Thyroid gland (tissue), 4 donors: ENCODE measurements at regions of chr3 and their contacts with region 1.

Region 1: DNA sequence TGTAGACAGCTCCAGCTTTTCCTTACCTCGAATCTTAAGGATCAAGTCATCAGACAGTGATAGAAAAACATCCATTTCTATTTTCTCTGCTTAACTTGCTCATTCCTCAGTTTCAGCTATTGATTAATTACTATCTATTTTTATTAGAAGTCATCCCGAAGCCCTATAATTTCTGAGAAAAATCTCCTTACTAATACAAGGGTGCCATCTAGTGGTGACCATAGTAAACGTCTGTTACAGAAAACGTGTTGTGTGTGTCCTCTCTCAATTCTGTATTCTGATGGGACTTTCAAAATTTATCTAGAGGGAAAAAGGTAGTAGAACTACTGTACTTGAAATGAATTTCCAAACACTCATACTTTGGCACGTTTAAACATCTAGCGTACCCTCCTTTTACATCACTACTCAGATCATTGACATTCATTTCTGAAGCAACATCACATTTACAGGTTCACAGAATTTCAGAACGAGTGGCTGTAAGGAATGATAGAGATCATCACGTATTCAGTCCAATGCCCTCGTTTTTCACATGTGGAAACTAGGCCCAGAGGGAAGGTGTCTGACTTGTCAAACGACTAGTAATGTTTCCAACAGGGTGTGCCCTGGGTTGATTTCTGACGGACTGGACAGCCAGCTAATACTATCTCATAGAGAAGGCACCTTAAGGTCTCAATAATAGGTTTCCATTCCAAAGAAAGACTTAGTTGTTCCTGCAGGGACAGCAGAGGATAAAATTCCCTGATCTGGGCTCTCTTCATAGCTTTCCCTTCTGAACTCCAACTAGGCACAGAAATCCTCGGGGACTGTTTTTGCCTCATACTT is 25.6 kb downstream of the HACD2 start:
- DNase-seq: no peak
- H3K4me3 ChIP-seq: no peak overlapping the region
- H3K27ac ChIP-seq: no peak overlapping the region
- H3K4me1 ChIP-seq: no peaks in the 10 kb centered on the region
- H3K27me3 ChIP-seq: no peaks in the 10 kb centered on the region
- CTCF ChIP-seq: peak; percentile 44 to 76 (median 66)
- POLR2A ChIP-seq: no peak

Region 2: DNA sequence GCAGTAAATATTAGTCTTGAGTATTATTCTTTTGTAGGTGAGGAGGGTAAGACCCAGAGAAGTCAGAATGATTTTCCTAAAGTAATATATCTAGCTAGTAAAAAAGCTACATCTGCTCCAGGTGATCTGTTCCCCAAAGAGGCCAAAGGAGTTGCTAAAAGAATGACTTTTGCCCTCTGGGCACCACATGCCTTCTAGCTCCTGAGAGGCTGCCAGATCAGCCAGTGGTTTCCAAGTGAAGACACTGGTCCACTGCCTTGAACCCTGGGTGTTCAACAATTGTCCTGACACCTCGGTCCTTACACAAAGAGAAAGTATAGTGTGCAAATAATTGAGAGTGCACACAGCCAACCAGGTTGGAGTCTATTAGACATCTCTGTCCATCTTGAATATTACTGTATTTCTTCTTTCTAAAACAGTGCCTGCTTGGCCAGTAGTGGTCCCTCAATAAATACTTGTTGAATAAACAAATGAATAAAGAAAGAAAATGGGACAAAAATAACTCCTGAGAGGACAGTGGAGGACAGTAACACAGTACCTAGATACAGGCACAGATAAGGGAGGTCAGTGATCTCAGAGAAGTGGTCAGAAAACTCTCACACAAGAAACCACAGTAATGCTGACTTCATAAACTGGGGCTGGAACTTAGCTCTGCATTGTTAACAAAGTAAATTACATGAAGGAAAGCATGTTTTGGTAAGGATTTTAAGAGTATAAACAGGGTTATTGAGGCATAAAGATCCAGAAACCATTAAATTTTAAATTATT is 1290.8 kb before region 1 on chr3:
- intact Hi-C with region 1: no loop called
- DNase-seq: no peak
- H3K4me3 ChIP-seq: no peak overlapping the region
- H3K27ac ChIP-seq: no peak overlapping the region
- H3K4me1 ChIP-seq: no peaks in the 10 kb centered on the region
- H3K27me3 ChIP-seq: no peaks in the 10 kb centered on the region
- CTCF ChIP-seq: no peak
- POLR2A ChIP-seq: no peak

Region 3: DNA sequence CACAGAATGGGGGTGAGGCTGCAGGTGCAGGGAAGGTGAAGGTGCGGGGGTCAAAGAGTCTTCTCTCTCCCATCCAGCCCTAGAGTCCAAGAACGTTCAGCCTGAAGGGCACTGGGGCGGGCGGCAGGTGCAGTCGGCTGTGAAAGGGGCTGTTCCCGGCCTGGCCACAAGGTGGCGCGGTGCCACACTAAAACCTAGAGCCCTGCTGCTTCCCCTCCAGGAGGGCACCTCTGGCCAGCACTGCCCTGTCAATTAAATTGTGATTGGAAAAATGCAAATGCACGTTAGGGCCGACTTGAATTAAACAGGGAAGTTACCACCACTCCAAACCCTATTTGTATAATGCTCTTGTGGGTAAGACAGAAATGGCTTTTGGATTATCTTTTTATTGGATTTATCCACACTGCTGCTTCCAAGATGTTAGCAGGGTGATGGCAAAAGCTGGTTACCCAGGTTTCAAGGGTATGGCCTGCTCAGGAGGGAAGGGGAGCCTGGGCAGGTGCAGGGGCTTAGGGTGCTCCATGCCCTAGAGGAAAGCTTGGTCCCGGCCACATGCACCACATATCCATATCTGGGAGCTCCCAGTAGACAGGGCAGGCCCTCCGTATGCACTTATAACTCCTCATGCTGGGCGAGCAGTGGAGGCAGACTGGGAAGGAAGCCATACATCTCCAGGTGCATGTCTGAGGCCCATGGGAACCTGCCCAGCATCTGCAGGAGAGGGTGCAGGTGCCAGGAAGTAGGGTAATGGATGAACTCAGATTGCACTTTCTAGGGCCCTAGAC is 230.2 kb before region 1 on chr3:
- intact Hi-C with region 1: loop called (anchors 5 kb)
- DNase-seq: peak; percentile 79 to 80
- H3K4me3 ChIP-seq: no peak overlapping the region
- H3K27ac ChIP-seq: no peak overlapping the region
- H3K4me1 ChIP-seq: no peaks in the 10 kb centered on the region
- H3K27me3 ChIP-seq: no peaks in the 10 kb centered on the region
- CTCF ChIP-seq: peak; percentile 77 to 94 (median 85)
- POLR2A ChIP-seq: no peak

Region 4: DNA sequence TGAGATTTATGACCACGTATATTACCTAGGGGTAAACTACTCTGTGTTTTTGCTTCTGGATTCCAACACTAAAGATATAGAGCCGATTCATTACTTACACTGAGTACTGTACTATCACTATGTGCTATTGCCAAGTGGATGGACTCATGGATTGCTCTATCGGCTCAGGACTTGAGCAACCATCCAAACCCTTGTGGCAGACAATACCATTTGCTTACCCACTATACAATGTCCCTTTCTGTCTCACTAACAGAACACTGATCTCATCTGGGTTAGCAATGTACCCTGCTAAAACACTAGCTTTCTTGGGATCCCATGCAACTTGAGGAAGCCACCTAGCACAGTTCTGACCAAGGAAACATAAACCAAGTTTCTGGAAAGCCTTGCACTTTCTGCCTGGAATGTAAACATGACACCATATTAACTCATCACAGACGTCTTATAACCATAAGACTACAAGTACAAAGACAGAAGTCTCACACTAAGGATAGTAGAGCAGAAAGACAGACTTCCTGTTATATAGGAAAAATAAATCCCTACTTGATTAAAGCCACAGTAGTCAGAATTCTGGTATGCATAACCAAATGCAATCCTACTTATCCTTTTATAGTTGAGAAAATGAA is 13.0 kb before region 1 on chr3:
- intact Hi-C with region 1: no loop called
- DNase-seq: no peak
- H3K4me3 ChIP-seq: no peak overlapping the region
- H3K27ac ChIP-seq: no peak overlapping the region
- H3K4me1 ChIP-seq: no peaks in the 10 kb centered on the region
- H3K27me3 ChIP-seq: no peaks in the 10 kb centered on the region
- CTCF ChIP-seq: no peak
- POLR2A ChIP-seq: no peak

Region 5: DNA sequence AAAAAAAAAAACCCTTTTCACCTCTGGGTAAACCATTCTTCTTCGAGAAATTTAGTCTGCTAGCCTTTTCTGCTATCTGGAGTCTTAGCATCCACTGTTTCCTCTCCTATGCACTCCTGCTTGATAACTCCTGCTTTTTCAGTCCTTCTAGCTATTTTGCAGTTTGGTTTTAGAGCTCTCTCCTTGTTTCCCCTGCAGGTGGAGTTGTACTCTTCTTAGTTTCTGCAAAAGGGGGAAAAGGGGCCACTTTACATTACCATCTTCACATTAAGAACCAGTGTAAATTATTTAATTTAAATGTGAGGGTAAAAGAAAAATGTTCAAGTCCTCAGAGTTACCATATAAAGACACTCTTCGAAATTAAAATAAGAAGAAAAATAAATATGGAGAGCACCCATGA is 348.5 kb after region 1 on chr3:
- intact Hi-C with region 1: no loop called
- DNase-seq: no peak
- H3K4me3 ChIP-seq: no peak overlapping the region
- H3K27ac ChIP-seq: no peak overlapping the region
- H3K4me1 ChIP-seq: no peaks in the 10 kb centered on the region
- H3K27me3 ChIP-seq: no peaks in the 10 kb centered on the region
- CTCF ChIP-seq: no peak
- POLR2A ChIP-seq: no peak